ENCODE measurements at regions of chr6 and their contacts with region 1.

Region 1: DNA sequence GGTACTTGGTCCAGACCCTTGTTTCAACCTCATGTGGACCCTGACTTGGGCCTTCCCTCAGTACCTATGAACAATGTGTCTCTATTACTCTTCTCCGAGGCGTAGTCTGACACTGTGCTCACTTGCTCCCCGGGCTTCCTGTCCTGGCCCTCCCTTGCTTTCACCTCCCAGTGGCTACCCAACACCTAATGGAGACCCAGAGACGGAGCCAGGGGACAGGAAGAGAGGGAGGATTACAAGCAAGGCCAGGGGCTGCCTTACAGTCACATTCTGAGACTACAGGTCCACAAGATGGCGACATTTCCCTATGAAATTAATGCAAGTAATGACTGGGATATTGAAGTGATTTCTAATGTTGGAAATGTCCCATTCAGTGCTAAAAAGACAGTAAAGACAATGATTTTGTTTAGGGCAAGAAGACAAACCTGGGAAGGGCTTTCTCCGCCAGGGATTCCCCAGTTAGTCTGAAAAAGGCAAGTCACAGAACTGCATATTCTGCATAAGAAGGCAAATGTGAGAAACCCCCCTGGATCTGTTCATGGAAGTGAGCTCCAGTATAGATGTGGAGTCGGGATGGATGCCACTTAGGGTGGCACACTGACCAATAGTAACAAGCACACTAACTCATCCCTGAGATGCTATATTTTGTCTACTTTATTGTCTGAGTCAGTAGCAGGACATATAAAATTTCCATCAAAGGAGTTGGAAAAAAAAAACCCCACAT is 44.0 kb upstream of the ZBTB24 start:
- DNase-seq: peak; percentile 37 to 69 (median 39)
- ATAC-seq: peak; percentile 27
- H3K4me3 ChIP-seq: no peak overlapping the region
- H3K27ac ChIP-seq: no peak overlapping the region
- H3K4me1 ChIP-seq: no peaks in the 10 kb centered on the region
- H3K27me3 ChIP-seq: no peaks in the 10 kb centered on the region
- CTCF ChIP-seq: peak in 6 of 7 experiments; percentile 38 to 56 (median 52)
- POLR2A ChIP-seq: no peak

Region 2: GRCh38 chr6:109362102-109362884 is 164.8 kb before region 1 on chr6:
- intact Hi-C with region 1: no loop called
- DNase-seq: no peak
- ATAC-seq: no peak
- H3K4me3 ChIP-seq: no peak overlapping the region
- H3K27ac ChIP-seq: no peak overlapping the region
- H3K4me1 ChIP-seq: no peaks in the 10 kb centered on the region
- H3K27me3 ChIP-seq: no peaks in the 10 kb centered on the region
- CTCF ChIP-seq: no peak
- POLR2A ChIP-seq: no peak

Region 3: DNA sequence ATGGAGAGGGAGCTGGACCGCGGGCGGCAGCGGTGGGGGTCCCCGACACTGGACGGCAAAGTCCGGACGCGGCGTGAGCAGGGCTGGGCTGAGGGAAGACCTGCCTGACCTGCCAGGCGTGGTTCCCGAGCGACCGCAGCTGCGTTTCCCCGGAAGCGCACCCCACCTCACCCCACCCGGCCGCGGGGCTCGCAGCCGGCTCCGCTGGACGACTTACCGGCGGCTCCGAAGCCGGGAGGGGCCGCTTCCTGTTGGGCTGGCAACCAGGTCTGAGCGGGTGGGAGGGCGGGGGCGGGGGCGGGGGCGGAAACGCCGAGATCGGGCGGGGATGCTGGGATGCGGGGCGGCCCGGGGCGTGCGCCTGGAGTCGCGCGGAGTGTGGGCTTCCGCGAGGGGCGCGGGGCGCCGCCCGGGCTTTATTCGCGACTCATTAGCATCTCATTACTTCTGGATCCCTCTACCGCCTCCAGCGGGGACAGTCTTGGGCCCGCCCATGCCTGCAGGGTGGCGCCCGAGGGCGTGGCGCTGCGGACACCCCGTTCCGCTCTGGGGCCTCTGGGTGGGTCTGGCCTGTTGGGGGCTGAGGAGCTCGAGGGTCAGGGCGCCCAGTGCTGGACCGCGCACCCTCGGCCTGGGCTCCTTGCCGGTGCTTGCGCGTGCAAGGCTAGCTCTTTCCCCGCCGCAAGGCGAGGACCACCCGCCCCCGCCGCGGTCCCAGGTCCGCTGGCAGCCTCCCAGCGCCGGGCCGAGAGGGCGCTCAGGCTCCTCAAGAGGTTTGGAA is 71.4 kb before region 1 on chr6 and contains the start of gene MICAL1:
- intact Hi-C with region 1: no loop called
- DNase-seq: peak; percentile 60 to 77 (median 72)
- ATAC-seq: peak; percentile 71
- H3K4me3 ChIP-seq: peak within 1 kb of the TSS; percentile 70 to 73
- H3K27ac ChIP-seq: peak within 1 kb of the TSS in 3 of 4 donors; percentile 13 to 71 (median 34)
- H3K4me1 ChIP-seq: peaks cover 18% of the 10 kb centered on the region
- H3K27me3 ChIP-seq: no peaks in the 10 kb centered on the region
- CTCF ChIP-seq: peak; percentile 22 to 46 (median 34)
- POLR2A ChIP-seq: peak in 2 of 3 donors; percentile 45 to 48
- total RNA-seq, gene MICAL1: 16.1 to 26.0 TPM

Region 4: DNA sequence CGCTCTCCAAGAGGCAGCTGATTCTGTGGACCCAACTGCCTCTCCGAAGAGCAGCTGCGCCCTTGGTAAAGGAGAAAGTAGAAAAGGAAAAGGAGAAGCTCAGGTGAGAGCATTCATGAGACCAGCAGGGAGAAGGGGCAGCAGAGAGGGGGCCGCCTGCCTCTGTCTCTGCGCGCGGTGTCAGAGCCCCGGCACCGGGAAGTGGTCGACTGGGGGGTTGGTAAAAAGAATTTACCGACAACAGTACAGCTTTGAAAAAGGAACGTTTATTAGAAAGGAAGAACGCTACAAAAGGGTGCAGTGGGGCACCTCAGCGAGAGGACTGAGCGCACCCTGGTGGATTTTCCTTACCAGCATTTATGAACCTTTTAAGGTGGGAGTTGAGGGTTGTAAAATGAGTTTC is 512.9 kb after region 1 on chr6:
- intact Hi-C with region 1: loop called (anchors 10 kb)
- DNase-seq: peak; percentile 18 to 46 (median 29)
- ATAC-seq: peak; percentile 57
- H3K4me3 ChIP-seq: no peak overlapping the region
- H3K27ac ChIP-seq: peak overlapping the region in 2 of 4 donors; percentile 15 to 51
- H3K4me1 ChIP-seq: peaks cover 9% of the 10 kb centered on the region
- H3K27me3 ChIP-seq: no peaks in the 10 kb centered on the region
- CTCF ChIP-seq: peak in 5 of 7 experiments; percentile 25 to 39 (median 36)
- POLR2A ChIP-seq: no peak